ENCODE measurements at regions of chr5 and their contacts with region 1.

Region 1: DNA sequence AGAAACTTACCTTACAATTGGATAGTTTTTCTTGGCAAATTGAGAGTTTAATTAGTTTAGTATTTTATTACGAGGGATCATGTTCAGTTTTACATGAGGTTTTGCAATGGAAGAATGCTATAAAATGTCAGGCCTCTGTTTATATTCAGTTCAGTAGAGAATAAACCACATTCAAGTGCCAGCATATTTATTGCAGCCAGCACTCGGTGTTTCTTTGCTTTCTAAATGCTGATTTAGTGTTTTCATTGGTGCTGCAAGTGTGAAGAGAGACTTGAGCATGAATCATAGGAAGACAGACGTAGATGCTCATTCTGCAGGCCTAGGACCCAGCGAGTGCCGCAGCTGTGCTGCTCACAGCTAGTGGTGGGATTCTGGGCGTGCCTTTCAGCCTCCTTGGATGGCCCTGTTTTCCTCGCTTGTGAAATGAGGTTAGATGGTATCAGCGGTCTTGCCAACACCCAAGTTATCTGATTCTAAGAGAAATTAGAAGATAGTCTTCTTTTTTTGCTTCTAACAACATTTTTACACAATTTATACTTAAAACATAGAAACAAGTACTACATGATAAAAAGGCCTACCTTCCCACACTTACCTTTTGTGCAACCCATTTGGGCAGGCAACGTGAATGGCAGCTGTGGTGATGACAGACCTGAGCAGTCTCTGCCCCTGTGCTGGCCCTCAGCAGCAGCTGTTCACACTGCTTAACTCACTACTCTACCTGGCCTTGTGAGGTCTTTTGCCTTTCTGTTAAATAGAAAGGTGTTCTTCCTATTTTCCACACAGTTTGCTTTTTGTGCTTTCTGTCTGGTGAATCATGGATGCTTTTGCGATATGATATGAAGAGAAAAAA is 26.8 kb upstream of the TNFAIP8 start:
- DNase-seq: peak; percentile 76
- H3K4me3 Mint-ChIP-seq: peak overlapping the region; percentile 57
- H3K27ac Mint-ChIP-seq: peak overlapping the region; percentile 94
- H3K4me1 Mint-ChIP-seq: peaks cover 93% of the 10 kb centered on the region
- H3K27me3 Mint-ChIP-seq: no peaks in the 10 kb centered on the region

Region 2: GRCh38 chr5:119070828-119071572 is 258.0 kb before region 1 on chr5 and contains the start of gene DMXL1:
- CTCF ChIA-PET with region 1: no interaction called
- intact Hi-C with region 1: loop called (anchors 2 kb)
- DNase-seq: peak; percentile 100
- H3K4me3 Mint-ChIP-seq: peak within 1 kb of the TSS; percentile 95
- H3K27ac Mint-ChIP-seq: peak within 1 kb of the TSS; percentile 97
- H3K4me1 Mint-ChIP-seq: peaks cover 38% of the 10 kb centered on the region
- H3K27me3 Mint-ChIP-seq: peaks cover 2% of the 10 kb centered on the region
- total RNA-seq, gene DMXL1: 16.4 to 18.0 TPM

Region 3: GRCh38 chr5:119274767-119275130 is 54.2 kb before region 1 on chr5:
- CTCF ChIA-PET with region 1: interaction called, 9 read pairs
- intact Hi-C with region 1: loop called (anchors 1 kb)
- DNase-seq: peak; percentile 50
- H3K4me3 Mint-ChIP-seq: peak overlapping the region; percentile 72
- H3K27ac Mint-ChIP-seq: peak overlapping the region; percentile 97
- H3K4me1 Mint-ChIP-seq: peaks cover 88% of the 10 kb centered on the region
- H3K27me3 Mint-ChIP-seq: no peaks in the 10 kb centered on the region

Region 4: DNA sequence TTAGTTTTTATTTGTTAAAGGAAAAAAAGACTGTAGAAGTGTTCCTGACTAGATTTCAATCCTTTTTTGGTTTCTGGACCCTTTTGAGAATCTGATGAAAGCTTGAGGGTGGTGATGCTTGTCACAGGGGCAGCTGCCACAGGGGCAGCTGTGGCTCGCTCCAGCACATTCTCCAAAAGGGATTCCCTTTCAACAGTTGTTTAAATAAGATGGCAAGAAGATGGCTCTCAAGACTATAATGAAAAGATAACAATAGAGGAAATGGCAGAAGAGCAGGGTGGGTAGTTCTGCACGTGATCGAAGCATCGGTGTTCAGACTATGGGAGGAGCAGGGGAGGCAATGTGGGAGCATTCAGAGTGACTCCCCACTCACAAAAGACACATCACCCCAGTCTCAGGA is 19.7 kb before region 1 on chr5:
- CTCF ChIA-PET with region 1: interaction called, 18 read pairs
- intact Hi-C with region 1: loop called (anchors 1 kb)
- DNase-seq: no peak
- H3K4me3 Mint-ChIP-seq: peak overlapping the region; percentile 21
- H3K27ac Mint-ChIP-seq: peak overlapping the region; percentile 95
- H3K4me1 Mint-ChIP-seq: peaks cover 96% of the 10 kb centered on the region
- H3K27me3 Mint-ChIP-seq: no peaks in the 10 kb centered on the region

Region 5: GRCh38 chr5:119340597-119341218 is 11.7 kb after region 1 on chr5:
- CTCF ChIA-PET with region 1: interaction called, 26 read pairs
- intact Hi-C with region 1: loop called (anchors 1 kb)
- DNase-seq: peak; percentile 68
- H3K4me3 Mint-ChIP-seq: peak overlapping the region; percentile 69
- H3K27ac Mint-ChIP-seq: peak overlapping the region; percentile 96
- H3K4me1 Mint-ChIP-seq: peaks cover 93% of the 10 kb centered on the region
- H3K27me3 Mint-ChIP-seq: no peaks in the 10 kb centered on the region

Region 6: DNA sequence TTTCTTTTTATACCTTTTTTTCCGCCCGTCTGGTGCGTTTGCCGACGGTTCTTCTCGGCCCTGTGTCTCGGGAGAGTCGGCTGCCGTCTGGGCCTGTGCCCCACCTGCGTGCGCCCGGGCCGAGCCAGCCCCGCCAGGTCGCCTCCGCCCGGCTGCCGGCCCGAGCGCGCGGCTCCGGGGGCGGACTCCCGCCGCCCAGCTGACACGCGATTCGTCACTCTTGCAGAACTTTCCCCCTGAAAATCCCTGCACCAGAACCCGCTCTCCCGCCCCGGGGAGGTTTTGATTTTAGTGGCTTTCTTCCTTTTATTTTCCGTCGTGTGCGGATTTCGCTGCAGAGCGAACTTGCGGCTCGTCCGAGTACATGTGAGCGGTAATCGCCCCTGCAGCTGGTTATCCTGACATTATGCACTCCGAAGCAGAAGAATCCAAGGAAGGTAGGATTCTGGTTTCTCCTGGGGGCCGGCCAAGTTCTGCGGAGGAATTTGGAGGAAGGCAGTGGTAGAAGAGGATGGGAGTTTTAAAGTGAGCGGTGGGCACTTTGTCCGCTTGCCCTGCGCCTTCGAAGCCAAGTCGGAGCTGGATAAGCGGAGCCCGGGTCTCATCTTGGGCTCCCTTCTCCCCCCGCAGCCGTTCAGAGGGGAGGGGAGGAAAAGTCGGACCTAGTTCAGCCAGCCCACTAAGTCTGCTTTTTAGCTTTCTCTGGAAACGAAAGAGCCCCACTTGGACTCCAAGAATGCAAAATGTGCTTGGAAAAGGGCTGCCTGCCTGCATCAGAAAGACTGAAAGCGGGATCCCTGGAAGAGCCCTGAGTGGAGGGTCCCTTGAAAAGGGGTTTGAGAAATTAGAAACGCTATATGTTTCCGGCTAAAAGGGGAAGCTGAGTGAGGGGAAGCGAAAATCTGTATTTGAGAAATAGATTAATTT is 27.0 kb after region 1 on chr5 and contains the start of gene TNFAIP8:
- CTCF ChIA-PET with region 1: interaction called, 5 read pairs
- intact Hi-C with region 1: loop called (anchors 1 kb)
- DNase-seq: peak; percentile 91
- H3K4me3 Mint-ChIP-seq: peak within 1 kb of the TSS; percentile 98
- H3K27ac Mint-ChIP-seq: peak within 1 kb of the TSS; percentile 98
- H3K4me1 Mint-ChIP-seq: peaks cover 67% of the 10 kb centered on the region
- H3K27me3 Mint-ChIP-seq: no peaks in the 10 kb centered on the region
- total RNA-seq, gene TNFAIP8: 141 to 142 TPM

Region 7: DNA sequence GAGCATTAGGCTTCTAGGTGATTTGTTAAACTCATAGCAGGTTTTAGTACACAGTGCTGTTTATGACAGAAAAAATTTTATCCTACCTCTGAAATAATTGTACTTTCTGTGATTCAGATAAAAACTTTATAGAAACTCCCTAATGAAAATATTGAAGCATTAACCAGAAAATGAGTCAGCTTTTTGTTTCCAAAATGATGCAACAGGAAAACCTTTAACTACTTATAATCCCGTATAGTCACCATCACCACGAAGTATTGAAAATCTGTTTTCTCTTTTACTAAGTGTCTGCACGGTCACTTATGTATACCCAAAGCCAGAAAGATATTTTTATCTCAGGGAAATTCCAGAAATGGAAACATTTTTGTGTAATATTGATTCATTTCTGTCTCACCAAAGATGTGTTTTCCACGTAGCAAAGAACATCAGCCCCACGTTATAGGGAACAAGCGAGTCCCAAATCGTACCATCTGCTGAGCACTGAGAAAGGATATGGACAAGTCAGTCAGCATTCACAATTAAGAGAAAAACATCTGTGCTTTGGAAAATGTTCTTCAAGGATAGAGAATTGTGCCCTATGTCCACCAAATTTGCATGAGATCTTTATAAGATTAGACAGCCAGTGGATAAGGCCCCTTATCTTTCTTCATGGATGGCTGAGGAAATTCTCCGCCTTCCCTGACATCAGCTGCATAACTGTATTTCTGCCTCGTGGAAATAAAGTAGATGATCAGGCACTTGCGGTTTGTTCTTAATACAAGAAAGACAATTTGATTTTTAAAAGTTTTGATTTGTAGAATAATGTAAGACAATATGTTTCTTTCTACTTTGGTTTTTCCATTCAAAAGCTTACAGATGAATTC is 68.8 kb after region 1 on chr5:
- CTCF ChIA-PET with region 1: no interaction called
- intact Hi-C with region 1: loop called (anchors 1 kb)
- DNase-seq: peak; percentile 55
- H3K4me3 Mint-ChIP-seq: peak overlapping the region; percentile 23
- H3K27ac Mint-ChIP-seq: peak overlapping the region; percentile 89
- H3K4me1 Mint-ChIP-seq: peaks cover 89% of the 10 kb centered on the region
- H3K27me3 Mint-ChIP-seq: no peaks in the 10 kb centered on the region

Region 8: DNA sequence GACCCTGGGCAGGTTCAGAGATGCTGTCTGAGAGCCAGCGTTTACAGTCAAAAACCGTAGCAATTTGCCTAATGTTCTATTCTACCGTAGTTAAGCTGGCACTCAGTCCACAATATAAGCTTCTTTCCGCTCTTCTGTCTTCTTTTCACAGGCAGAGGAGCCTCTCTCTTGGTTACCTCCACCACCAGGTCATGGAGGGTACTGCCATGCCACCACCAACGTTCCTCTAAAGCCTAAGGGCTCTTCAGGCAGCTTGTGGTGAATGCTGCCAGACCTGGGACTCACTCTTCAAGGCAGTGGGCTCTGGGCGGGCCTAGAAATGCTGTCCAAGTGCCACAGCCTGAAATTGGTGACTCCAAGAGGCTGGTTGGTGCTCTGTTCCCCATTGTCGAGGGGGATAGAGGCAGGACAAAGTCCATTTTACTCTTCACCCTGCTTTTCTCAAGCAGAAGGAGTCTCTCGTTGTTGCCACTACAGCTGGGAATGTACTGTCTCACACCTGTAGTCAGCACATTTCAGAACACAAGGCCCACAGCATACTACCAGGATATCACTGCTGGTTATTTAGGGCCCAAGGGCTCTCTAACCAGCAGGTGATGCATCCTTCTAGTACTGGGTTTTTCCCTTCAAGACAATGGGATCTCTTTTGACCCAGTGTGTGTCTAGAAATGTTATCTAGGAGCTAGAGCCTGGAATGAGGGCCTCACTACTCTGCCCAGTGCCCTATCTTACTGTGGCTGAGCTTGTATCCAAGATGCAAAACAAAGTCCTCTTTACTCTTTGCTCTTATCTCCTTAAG is 899.9 kb after region 1 on chr5:
- CTCF ChIA-PET with region 1: no interaction called
- intact Hi-C with region 1: no loop called
- DNase-seq: no peak
- H3K4me3 Mint-ChIP-seq: no peak overlapping the region
- H3K27ac Mint-ChIP-seq: no peak overlapping the region
- H3K4me1 Mint-ChIP-seq: no peaks in the 10 kb centered on the region
- H3K27me3 Mint-ChIP-seq: no peaks in the 10 kb centered on the region